Activated CD4-positive, alpha-beta T cell treated with anti-CD3 and anti-CD28 coated beads, Interleukin-2, amount 10 ng/mL, durations not matched to agents 7 days and 5 days (primary cell): ENCODE measurements at regions of chr2 and their contacts with region 1.

Region 1: DNA sequence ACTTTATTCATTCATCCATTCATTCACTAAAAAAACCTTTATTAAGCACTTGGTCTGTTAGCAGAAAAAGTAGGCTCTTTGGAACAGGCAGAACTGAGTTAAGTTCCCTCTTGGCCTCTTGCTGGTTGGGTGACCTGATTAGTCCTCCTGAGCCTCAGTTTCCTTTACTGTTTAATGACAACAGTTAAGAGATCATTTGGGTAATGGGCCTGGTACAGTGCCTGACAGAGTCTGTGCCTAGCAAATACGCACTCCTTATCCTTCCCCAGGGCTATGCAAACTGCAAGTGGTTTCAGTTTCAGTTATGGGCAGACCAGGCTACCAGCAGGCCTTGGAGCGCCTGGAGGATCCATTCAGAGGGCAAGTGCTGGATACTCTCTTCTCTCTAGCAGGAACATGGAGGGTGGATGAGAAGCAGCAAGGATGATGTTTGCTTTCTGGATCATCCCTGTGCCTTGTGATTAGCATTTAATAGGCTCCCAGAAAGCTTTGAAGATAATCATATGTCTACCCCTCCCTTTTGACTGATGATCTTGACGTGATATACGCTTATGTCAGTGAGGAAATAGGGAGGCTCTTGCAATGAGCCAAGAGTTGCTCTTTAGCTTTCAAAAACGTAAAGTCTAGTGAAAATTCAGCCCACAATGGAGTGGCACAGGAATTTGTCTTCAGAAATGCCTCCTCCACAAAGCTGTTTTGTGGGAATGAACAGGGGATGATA is 12.4 kb upstream of the TAF1B start:
- DNase-seq: peak; percentile 26
- H3K4me3 Mint-ChIP-seq: no peak overlapping the region
- H3K27ac Mint-ChIP-seq: no peak overlapping the region
- H3K4me1 Mint-ChIP-seq: peaks cover 17% of the 10 kb centered on the region
- H3K27me3 Mint-ChIP-seq: peaks cover 48% of the 10 kb centered on the region

Region 2: DNA sequence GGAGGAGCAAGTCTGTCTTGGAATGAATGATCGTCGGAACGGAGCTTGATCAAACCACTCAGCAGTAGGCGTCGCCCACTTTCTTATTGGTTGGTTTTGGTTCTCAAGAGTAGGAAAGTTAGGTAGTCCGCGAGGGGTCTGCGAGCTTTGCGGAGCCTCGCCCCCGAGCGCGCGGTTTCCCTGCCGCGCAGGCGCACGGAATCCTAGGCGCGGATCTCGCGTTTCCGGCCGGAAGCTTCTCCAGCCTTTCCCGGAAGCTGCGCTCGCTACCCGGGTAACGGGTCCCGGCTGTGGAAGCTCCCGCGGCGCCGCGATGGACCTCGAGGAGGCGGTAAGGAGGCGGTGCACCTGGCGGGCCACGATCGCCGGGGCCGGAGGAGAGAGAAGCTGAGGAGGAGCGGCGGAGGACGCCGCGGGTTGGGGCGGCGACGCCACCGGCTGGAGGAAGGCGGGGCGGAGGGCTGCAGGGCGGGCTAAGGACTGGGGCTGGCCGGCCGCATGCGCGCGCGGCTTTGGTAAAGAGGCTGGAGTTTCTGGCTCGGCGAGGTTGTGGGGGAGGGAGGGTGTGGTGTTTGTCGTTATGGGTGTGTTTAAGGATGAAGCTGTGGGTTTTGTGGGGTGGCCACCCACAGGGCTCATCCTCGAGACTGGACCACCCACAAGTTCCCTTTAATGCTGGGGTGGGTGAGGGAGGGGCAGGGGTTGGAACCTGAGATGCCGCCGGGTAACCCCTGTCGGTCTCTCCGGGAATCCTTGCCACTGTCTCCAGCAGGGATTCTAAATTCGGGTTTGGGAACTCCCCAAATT is 12.6 kb after region 1 on chr2 and contains the start of gene TAF1B:
- CTCF ChIA-PET with region 1: interaction called, 15 read pairs
- POLR2A ChIA-PET with region 1: interaction called, 3 read pairs
- DNase-seq: peak; percentile 88
- H3K4me3 Mint-ChIP-seq: peak within 1 kb of the TSS; percentile 94
- H3K27ac Mint-ChIP-seq: peak within 1 kb of the TSS; percentile 92
- H3K4me1 Mint-ChIP-seq: peaks cover 51% of the 10 kb centered on the region
- H3K27me3 Mint-ChIP-seq: peaks cover 2% of the 10 kb centered on the region
- total RNA-seq, gene TAF1B: 30.6 to 36.2 TPM